MCF 10A (cell line): ENCODE measurements at regions of chr14 and their contacts with region 1.

Region 1: DNA sequence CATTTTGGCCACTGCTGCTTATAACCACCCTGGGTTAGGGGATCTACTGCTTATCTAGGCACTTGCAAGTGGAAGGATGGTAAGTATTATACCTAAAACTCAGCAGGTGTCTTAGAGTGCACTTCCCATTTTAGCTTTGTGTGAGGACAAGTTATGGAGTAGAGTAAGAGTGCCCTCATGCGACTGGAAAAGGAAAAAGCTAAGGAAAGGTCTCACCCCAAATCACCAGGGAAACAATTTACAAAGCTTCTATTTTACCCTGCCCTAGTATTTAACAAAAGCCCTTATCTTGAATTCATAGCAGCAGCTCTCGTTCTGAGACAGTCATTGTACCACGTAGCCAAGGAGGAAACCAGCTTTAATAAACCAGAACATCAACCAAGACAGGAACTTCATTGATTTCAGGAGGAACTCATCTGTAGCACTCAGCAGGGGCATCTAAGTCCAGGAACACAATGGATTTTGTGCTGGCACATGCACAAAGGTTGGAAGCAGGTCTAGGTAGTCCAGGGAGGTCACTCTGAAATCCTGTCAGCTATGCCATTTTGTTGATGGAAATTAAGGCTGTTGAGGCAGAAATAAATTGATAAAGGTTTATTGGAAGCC is 2.9 kb downstream of the RDH12 start:
- DNase-seq: peak; percentile 70
- H3K4me3 Mint-ChIP-seq: no peak overlapping the region
- H3K27ac Mint-ChIP-seq: no peak overlapping the region
- H3K4me1 Mint-ChIP-seq: peaks cover 9% of the 10 kb centered on the region
- H3K27me3 Mint-ChIP-seq: no peaks in the 10 kb centered on the region
- CTCF ChIP-seq: peak; percentile 75

Region 2: DNA sequence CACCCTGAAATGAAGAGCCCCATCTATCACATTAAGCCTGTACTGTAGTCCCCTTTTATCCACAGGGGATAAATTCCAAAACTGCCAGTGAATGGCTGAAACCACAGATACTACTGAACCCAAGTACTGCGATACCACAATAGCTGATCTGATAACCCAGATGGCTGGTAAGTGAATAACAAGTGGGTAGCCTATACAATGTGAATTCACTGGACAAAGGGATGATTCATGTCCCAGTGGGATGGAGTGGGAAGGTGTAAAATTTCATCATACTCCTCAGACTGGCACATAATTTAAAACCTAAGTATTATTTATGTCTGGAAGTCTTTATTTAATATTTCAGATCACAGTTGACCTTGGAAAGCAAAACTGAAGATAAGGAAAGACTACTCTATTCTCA is 995.3 kb before region 1 on chr14:
- CTCF ChIA-PET with region 1: no interaction called
- POLR2A ChIA-PET with region 1: no interaction called
- intact Hi-C with region 1: loop called (anchors 5 kb)
- DNase-seq: peak; percentile 69
- H3K4me3 Mint-ChIP-seq: no peak overlapping the region
- H3K27ac Mint-ChIP-seq: peak overlapping the region; percentile 18
- H3K4me1 Mint-ChIP-seq: peaks cover 6% of the 10 kb centered on the region
- H3K27me3 Mint-ChIP-seq: no peaks in the 10 kb centered on the region
- CTCF ChIP-seq: no peak

Region 3: GRCh38 chr14:66735853-66736252 is 968.7 kb before region 1 on chr14:
- CTCF ChIA-PET with region 1: no interaction called
- POLR2A ChIA-PET with region 1: no interaction called
- intact Hi-C with region 1: no loop called
- DNase-seq: no peak
- H3K4me3 Mint-ChIP-seq: no peak overlapping the region
- H3K27ac Mint-ChIP-seq: no peak overlapping the region
- H3K4me1 Mint-ChIP-seq: no peaks in the 10 kb centered on the region
- H3K27me3 Mint-ChIP-seq: no peaks in the 10 kb centered on the region
- CTCF ChIP-seq: no peak

Region 4: DNA sequence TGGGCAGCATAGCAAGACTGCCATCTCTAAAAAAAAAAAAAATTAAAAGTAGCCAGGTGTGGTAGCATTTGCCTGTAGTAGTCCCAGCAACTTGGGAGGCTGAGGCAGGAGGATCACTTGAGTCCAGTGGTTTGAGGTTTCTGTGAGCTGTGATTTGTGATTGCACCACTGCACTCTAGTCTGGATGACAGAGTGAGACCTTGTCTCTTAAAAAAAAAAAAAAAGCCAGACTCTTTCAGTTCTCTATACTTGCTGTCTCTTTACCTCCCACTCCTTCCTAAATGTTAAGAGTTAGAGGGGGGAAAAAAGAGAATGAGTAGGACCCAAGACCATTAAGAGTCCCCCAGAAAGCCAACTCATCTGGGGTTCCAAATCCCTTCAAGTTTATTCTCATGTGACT is 326.7 kb before region 1 on chr14:
- CTCF ChIA-PET with region 1: no interaction called
- POLR2A ChIA-PET with region 1: no interaction called
- intact Hi-C with region 1: no loop called
- DNase-seq: no peak
- H3K4me3 Mint-ChIP-seq: no peak overlapping the region
- H3K27ac Mint-ChIP-seq: no peak overlapping the region
- H3K4me1 Mint-ChIP-seq: no peaks in the 10 kb centered on the region
- H3K27me3 Mint-ChIP-seq: no peaks in the 10 kb centered on the region
- CTCF ChIP-seq: no peak

Region 5: GRCh38 chr14:67583711-67584644 is 120.6 kb before region 1 on chr14:
- CTCF ChIA-PET with region 1: interaction called, 132 read pairs
- POLR2A ChIA-PET with region 1: interaction called, 3 read pairs
- intact Hi-C with region 1: loop called (anchors 1 kb)
- DNase-seq: peak; percentile 66
- H3K4me3 Mint-ChIP-seq: no peak overlapping the region
- H3K27ac Mint-ChIP-seq: no peak overlapping the region
- H3K4me1 Mint-ChIP-seq: no peaks in the 10 kb centered on the region
- H3K27me3 Mint-ChIP-seq: no peaks in the 10 kb centered on the region
- CTCF ChIP-seq: peak; percentile 65

Region 6: DNA sequence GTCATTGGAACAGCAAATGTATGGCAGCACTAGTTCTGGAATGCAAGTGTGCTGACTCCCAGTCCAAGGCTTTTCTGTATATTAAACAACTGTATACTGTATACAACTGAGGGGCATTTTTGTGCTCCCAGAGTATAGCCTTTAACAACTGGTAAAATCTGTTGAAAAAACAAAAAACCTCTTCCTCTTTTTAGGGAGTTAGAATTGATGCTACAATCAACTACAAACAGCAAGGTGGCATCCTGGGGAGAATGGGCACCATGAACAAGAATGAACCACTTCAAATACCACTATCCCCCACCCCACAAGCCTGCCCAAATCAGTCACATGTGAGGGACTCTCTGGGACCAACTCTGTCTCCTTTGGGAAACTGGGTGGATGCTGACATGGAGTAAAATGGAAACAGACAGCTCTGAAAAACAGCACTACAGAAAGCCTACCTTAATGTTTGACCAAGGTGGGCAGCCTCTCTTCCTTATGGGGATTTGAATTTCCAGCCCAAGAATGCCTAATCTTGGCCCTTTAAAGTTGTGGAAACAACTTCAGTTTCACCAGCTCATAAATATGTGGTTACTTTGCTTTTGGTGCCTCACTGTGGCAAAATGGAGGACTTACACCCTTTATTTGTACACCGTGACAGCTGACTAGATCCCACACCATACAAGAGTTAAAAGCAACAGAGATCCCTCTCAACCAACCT is 37.7 kb before region 1 on chr14:
- CTCF ChIA-PET with region 1: interaction called, 53 read pairs
- POLR2A ChIA-PET with region 1: interaction called, 4 read pairs
- intact Hi-C with region 1: loop called (anchors 1 kb)
- DNase-seq: peak; percentile 72
- H3K4me3 Mint-ChIP-seq: no peak overlapping the region
- H3K27ac Mint-ChIP-seq: peak overlapping the region; percentile 27
- H3K4me1 Mint-ChIP-seq: peaks cover 17% of the 10 kb centered on the region
- H3K27me3 Mint-ChIP-seq: no peaks in the 10 kb centered on the region
- CTCF ChIP-seq: peak; percentile 73

Region 7: DNA sequence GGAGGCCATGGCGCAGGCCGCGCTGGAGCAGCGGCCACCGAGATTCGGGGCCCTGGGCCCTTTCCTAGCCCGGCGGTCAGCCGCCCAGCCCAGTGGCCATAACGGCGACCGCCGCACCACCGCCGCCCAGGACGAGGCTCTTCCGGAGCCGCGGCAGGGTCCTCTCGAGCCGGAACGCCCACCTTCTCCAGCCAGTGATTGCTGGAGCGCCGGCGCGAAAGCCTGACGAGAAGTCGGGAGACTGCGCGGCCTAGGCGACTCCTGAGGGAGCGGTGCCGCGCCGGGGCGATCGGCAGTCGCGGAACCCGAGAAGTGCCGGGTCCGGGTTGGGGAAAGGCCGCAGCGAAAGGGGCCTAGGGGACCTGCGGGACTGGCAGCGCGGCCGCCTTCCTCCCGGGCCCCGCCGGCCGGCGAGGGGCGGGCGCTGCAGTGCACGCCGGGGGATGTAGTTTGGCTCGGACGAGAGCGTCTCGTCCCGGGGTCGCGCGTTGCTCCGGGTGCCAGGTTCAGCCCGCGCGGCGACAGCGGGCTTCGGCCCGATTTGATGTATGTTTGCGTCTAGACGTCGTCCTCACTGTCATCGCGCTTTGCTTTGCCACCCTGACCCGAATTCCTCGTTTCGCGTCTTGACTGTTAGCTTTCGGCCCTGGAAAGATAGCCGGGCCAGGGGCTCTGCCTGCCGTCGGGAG is 30.0 kb before region 1 on chr14 and contains the start of gene VTI1B:
- CTCF ChIA-PET with region 1: interaction called, 53 read pairs
- POLR2A ChIA-PET with region 1: interaction called, 19 read pairs
- intact Hi-C with region 1: loop called (anchors 2 kb)
- DNase-seq: peak; percentile 67
- H3K4me3 Mint-ChIP-seq: peak within 1 kb of the TSS; percentile 86
- H3K27ac Mint-ChIP-seq: peak within 1 kb of the TSS; percentile 88
- H3K4me1 Mint-ChIP-seq: peaks cover 27% of the 10 kb centered on the region
- H3K27me3 Mint-ChIP-seq: no peaks in the 10 kb centered on the region
- CTCF ChIP-seq: no peak
- total RNA-seq, gene VTI1B: 57.5 and 84.3 TPM in 2 replicates

Region 8: GRCh38 chr14:67722293-67722692 is 17.7 kb after region 1 on chr14:
- CTCF ChIA-PET with region 1: interaction called, 13 read pairs
- POLR2A ChIA-PET with region 1: no interaction called
- intact Hi-C with region 1: no loop called
- DNase-seq: no peak
- H3K4me3 Mint-ChIP-seq: no peak overlapping the region
- H3K27ac Mint-ChIP-seq: no peak overlapping the region
- H3K4me1 Mint-ChIP-seq: no peaks in the 10 kb centered on the region
- H3K27me3 Mint-ChIP-seq: peaks cover 51% of the 10 kb centered on the region
- CTCF ChIP-seq: no peak